Panc1 (cell line): ENCODE measurements at regions of chr16 and their contacts with region 1.

Region 1: DNA sequence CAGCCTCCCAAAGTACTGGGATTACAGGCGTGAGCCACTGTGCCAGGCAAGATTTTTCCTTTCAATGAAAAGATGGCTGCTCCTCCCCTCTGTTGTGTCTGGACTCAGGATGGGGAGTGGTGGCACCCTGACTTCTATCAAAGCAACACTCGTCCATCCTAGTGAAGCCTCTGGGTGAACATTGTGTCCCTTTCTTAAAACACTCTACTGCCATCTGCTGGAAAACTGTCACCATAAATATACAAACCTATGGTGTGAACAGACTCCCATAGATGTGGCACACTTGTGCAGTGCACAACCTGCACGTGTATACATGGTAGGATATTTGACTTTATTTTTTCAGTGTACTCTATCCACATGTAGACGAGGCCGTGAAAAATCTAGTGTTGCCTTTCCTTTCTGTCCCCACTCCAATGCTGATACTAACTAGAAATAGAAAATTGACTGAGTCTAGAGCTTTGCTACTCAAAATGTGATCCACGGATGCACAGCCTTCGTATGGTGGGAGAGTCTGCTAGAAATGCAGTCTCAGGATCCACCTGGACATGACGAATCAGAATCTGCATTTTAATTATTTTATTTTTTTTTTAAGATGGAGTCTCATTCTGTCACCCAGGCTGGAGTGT is 55.9 kb upstream of the PLCG2 start:
- DNase-seq: peak; percentile 46
- ATAC-seq: peak; percentile 96
- H3K4me3 ChIP-seq: no peak overlapping the region
- H3K27ac ChIP-seq: no peak overlapping the region
- H3K4me1 ChIP-seq: no peaks in the 10 kb centered on the region
- H3K27me3 ChIP-seq: no peaks in the 10 kb centered on the region
- CTCF ChIP-seq: peak; percentile 72

Region 2: GRCh38 chr16:81366316-81366932 is 356.8 kb before region 1 on chr16:
- CTCF ChIA-PET with region 1: no interaction called
- POLR2A ChIA-PET with region 1: interaction called, 9 read pairs
- in situ Hi-C with region 1: no loop called
- intact Hi-C with region 1: loop called (anchors 2 kb)
- DNase-seq: peak; percentile 12
- ATAC-seq: peak; percentile 82; the same call in 1 of the 2 replicates
- H3K4me3 ChIP-seq: no peak overlapping the region
- H3K27ac ChIP-seq: no peak overlapping the region
- H3K4me1 ChIP-seq: no peaks in the 10 kb centered on the region
- H3K27me3 ChIP-seq: no peaks in the 10 kb centered on the region
- CTCF ChIP-seq: peak; percentile 64

Region 3: DNA sequence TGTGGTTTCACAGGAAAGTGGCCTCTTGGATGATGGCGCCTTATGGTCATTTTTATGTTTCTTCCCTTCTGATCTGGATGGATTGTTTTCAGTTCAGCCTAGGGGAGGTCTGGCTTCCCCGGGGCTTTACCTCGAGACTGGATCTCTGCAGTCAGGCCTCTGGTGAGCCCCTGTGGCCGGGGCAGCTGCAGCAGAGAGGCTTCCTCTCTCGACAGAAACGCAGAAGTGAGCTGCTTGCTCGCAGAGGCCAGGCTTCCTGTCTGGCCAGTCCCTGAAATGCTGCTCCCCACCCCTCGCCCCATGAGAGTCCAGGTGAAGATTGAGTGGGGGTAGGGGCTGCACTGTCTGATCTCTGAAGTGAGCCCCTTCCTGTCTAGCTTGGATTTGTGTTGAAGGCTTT is 99.9 kb after region 1 on chr16:
- CTCF ChIA-PET with region 1: no interaction called
- POLR2A ChIA-PET with region 1: no interaction called
- in situ Hi-C with region 1: no loop called
- intact Hi-C with region 1: no loop called
- DNase-seq: no peak
- ATAC-seq: no peak
- H3K4me3 ChIP-seq: no peak overlapping the region
- H3K27ac ChIP-seq: no peak overlapping the region
- H3K4me1 ChIP-seq: no peaks in the 10 kb centered on the region
- H3K27me3 ChIP-seq: no peaks in the 10 kb centered on the region
- CTCF ChIP-seq: no peak